AG04450 (cell line): ENCODE measurements at regions of chr7 and their contacts with region 1.

Region 1: GRCh38 chr7:77759294-77759889 is 38.8 kb downstream of the TMEM60 start:
- DNase-seq: peak; percentile 50
- H3K4me3 ChIP-seq: no peak overlapping the region
- H3K27ac ChIP-seq: no peak overlapping the region
- H3K27me3 ChIP-seq: no peaks in the 10 kb centered on the region
- CTCF ChIP-seq: peak; percentile 80

Region 2: GRCh38 chr7:77288676-77289320 is 470.6 kb before region 1 on chr7:
- CTCF ChIA-PET with region 1: no interaction called
- POLR2A ChIA-PET with region 1: no interaction called
- DNase-seq: no peak
- H3K4me3 ChIP-seq: no peak overlapping the region
- H3K27ac ChIP-seq: no peak overlapping the region
- H3K27me3 ChIP-seq: no peaks in the 10 kb centered on the region
- CTCF ChIP-seq: no peak

Region 3: GRCh38 chr7:77657427-77658224 is 101.8 kb before region 1 on chr7:
- CTCF ChIA-PET with region 1: interaction called, 116 read pairs
- POLR2A ChIA-PET with region 1: no interaction called
- DNase-seq: no peak
- H3K4me3 ChIP-seq: no peak overlapping the region
- H3K27ac ChIP-seq: no peak overlapping the region
- H3K27me3 ChIP-seq: no peaks in the 10 kb centered on the region
- CTCF ChIP-seq: peak; percentile 55

Region 4: GRCh38 chr7:77665161-77665560 is 94.2 kb before region 1 on chr7:
- CTCF ChIA-PET with region 1: interaction called, 66 read pairs
- POLR2A ChIA-PET with region 1: no interaction called
- DNase-seq: no peak
- H3K4me3 ChIP-seq: no peak overlapping the region
- H3K27ac ChIP-seq: no peak overlapping the region
- H3K27me3 ChIP-seq: no peaks in the 10 kb centered on the region
- CTCF ChIP-seq: no peak

Region 5: DNA sequence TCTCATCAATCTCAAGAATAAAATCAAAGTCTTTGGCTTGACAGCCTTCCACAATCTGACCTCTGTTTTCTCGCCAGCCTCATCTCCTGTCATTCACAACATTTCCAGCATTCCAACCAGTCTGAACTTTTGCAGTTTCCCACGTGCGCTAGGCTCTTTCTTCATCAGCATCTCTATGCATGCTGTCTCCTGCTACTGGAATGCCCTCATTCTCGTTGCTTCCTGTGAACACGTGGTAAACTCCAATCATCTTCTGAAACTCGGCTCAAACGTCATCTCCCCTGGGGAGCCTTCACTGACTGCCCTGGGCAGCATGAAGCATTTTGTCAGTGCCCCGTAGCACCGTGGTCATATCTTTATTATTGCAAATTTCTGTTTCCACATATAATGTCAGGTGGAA is 75.4 kb before region 1 on chr7:
- CTCF ChIA-PET with region 1: interaction called, 10 read pairs
- POLR2A ChIA-PET with region 1: no interaction called
- DNase-seq: no peak
- H3K4me3 ChIP-seq: no peak overlapping the region
- H3K27ac ChIP-seq: no peak overlapping the region
- H3K27me3 ChIP-seq: no peaks in the 10 kb centered on the region
- CTCF ChIP-seq: no peak

Region 6: GRCh38 chr7:77727527-77727926 is 31.9 kb before region 1 on chr7:
- CTCF ChIA-PET with region 1: interaction called, 14 read pairs
- POLR2A ChIA-PET with region 1: no interaction called
- DNase-seq: no peak
- H3K4me3 ChIP-seq: no peak overlapping the region
- H3K27ac ChIP-seq: peak overlapping the region; percentile 39
- H3K27me3 ChIP-seq: no peaks in the 10 kb centered on the region
- CTCF ChIP-seq: no peak

Region 7: DNA sequence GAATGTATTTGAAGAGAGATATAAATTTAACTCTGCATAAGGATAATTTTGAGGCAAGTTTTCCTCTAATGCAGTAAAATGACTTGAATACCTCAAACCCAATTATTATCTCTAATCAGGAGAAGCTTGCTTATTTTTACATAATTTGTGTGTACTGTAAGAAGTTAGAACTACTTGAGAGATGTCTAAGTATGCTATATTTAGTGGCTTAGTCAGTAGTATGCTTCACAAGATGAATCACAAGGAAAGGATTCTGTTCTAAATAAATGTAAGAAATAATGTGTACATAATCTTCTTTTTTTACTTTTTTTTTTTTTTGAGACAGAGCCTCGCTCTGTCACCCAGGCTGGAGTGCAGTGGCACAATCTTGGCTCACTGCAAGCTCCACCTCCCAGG is 52.9 kb after region 1 on chr7:
- CTCF ChIA-PET with region 1: no interaction called
- POLR2A ChIA-PET with region 1: no interaction called
- DNase-seq: peak; percentile 33
- H3K4me3 ChIP-seq: no peak overlapping the region
- H3K27ac ChIP-seq: no peak overlapping the region
- H3K27me3 ChIP-seq: no peaks in the 10 kb centered on the region
- CTCF ChIP-seq: no peak